A549 (cell line): ENCODE measurements at regions of chr14 and their contacts with region 1.

Region 1: DNA sequence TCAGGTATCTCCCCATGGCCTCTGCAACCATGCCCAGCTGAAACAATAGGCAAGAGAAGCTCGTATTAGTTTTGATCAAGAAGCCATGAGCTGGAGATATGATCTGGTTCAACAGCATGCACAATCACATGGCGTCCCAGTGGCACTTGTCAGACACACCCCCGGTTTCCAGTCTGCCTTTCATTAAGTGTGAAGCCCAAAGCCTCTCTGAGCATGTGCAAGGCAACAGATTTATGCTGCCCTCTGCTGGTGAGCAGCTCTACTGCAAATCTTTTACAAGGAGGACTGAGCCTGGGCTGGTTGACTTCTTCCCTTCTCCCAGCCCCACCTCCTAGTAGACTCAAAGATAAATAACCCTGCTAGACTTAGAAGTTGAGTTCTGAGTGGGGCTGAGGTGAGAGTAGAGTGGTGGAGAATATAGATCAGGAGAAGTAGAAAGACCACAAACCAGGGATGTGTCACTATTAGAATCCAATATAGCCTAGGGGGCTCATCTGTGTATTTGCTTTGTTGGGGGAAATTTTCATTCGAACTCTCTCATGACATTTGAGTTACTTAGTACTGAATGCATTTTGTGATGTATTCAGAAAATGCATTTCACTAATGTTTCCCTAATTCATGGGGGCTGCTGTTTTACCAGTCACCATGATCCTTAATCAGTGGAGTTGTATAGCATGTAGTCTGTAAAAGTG is 53.7 kb upstream of the MBIP start:
- DNase-seq: peak; percentile 38 to 81
- ATAC-seq: peak; percentile 92 to 99
- H3K4me3 ChIP-seq: no peak overlapping the region
- H3K27ac ChIP-seq: no peak overlapping the region
- H3K4me1 ChIP-seq: no peaks in the 10 kb centered on the region
- CTCF ChIP-seq: peak; percentile 73
- EP300 ChIP-seq: no peak
- POLR2A ChIP-seq: no peak
- RAD21 ChIP-seq: peak; percentile 72 to 75

Region 2: GRCh38 chr14:36363697-36364096 is 10.4 kb before region 1 on chr14:
- CTCF ChIA-PET with region 1: interaction called, 15 read pairs
- POLR2A ChIA-PET with region 1: no interaction called
- DNase-seq: no peak
- ATAC-seq: no peak
- H3K4me3 ChIP-seq: no peak overlapping the region
- H3K27ac ChIP-seq: no peak overlapping the region
- H3K4me1 ChIP-seq: no peaks in the 10 kb centered on the region
- CTCF ChIP-seq: no peak
- EP300 ChIP-seq: no peak
- POLR2A ChIP-seq: no peak
- RAD21 ChIP-seq: no peak

Region 3: DNA sequence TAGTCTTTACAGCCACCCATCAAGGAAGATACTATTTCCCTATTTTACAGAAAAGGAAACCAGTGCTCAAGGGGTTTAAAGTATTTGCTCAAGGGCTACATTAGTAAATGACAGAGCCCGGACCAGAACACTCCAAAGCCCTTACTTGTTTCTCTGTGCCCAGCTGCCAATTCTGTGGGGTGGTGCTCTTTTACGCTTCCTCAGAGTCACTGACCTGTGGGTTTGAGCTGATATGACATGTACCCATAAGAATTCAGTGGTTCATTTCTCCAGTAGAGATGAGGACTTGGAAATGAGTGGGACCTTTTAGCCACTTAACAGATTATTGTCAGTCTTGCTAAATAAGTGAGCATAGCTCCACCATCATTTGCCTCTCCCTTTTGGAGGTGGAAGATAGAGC is 245.7 kb after region 1 on chr14:
- CTCF ChIA-PET with region 1: no interaction called
- POLR2A ChIA-PET with region 1: no interaction called
- DNase-seq: no peak
- ATAC-seq: no peak
- H3K4me3 ChIP-seq: no peak overlapping the region
- H3K27ac ChIP-seq: no peak overlapping the region
- H3K4me1 ChIP-seq: no peaks in the 10 kb centered on the region
- CTCF ChIP-seq: no peak
- EP300 ChIP-seq: no peak
- POLR2A ChIP-seq: no peak
- RAD21 ChIP-seq: no peak